Right ventricle myocardium inferior (tissue), 1 donor: ENCODE measurements at regions of chr17 and their contacts with region 1.

Region 1: GRCh38 chr17:73480740-73481139 is 163.5 kb downstream of the SDK2 start:
- DNase-seq: no peak
- ATAC-seq: peak; percentile 89

Region 2: GRCh38 chr17:73532421-73532901 is 51.7 kb after region 1 on chr17:
- intact Hi-C with region 1: loop called (anchors 2 kb)
- DNase-seq: peak; percentile 45
- ATAC-seq: no peak

Region 3: GRCh38 chr17:73814075-73814474 is 333.3 kb after region 1 on chr17:
- intact Hi-C with region 1: no loop called
- DNase-seq: no peak
- ATAC-seq: no peak